ENCODE measurements at regions of chr9 and their contacts with region 1.

Region 1: GRCh38 chr9:122810306-122810946 is 10.5 kb downstream of the OR1K1 start:
- DNase-seq: peak; percentile 59 to 77 (median 63)
- H3K4me3 ChIP-seq: no peak overlapping the region
- H3K4me3 Mint-ChIP-seq: no peak overlapping the region
- H3K27ac ChIP-seq: no peak overlapping the region
- H3K27ac Mint-ChIP-seq: no peak overlapping the region
- H3K4me1 ChIP-seq: peaks cover 8 to 10% of the 10 kb centered on the region in 2 donors
- H3K4me1 Mint-ChIP-seq: peaks cover 9% of the 10 kb centered on the region
- H3K27me3 ChIP-seq: no peaks in the 10 kb centered on the region
- H3K27me3 Mint-ChIP-seq: peaks cover 0 to 7% (median 0%) of the 10 kb centered on the region in 3 donors
- CTCF ChIP-seq: peak; percentile 85

Region 2: GRCh38 chr9:122125158-122125508 is 685.3 kb before region 1 on chr9:
- intact Hi-C with region 1: loop called in 1 of 2 experiments (anchors 10 kb)
- DNase-seq: peak; percentile 56 to 66 (median 66)
- H3K4me3 ChIP-seq: no peak overlapping the region
- H3K4me3 Mint-ChIP-seq: peak overlapping the region in 1 of 2 donors; percentile 86
- H3K27ac ChIP-seq: no peak overlapping the region
- H3K27ac Mint-ChIP-seq: no peak overlapping the region
- H3K4me1 ChIP-seq: peaks cover 4 to 9% of the 10 kb centered on the region in 2 donors
- H3K4me1 Mint-ChIP-seq: peaks cover 12% of the 10 kb centered on the region
- H3K27me3 ChIP-seq: peaks cover 18 to 30% of the 10 kb centered on the region in 2 donors
- H3K27me3 Mint-ChIP-seq: peaks cover 38 to 43% (median 41%) of the 10 kb centered on the region in 3 donors
- CTCF ChIP-seq: peak; percentile 88

Region 3: DNA sequence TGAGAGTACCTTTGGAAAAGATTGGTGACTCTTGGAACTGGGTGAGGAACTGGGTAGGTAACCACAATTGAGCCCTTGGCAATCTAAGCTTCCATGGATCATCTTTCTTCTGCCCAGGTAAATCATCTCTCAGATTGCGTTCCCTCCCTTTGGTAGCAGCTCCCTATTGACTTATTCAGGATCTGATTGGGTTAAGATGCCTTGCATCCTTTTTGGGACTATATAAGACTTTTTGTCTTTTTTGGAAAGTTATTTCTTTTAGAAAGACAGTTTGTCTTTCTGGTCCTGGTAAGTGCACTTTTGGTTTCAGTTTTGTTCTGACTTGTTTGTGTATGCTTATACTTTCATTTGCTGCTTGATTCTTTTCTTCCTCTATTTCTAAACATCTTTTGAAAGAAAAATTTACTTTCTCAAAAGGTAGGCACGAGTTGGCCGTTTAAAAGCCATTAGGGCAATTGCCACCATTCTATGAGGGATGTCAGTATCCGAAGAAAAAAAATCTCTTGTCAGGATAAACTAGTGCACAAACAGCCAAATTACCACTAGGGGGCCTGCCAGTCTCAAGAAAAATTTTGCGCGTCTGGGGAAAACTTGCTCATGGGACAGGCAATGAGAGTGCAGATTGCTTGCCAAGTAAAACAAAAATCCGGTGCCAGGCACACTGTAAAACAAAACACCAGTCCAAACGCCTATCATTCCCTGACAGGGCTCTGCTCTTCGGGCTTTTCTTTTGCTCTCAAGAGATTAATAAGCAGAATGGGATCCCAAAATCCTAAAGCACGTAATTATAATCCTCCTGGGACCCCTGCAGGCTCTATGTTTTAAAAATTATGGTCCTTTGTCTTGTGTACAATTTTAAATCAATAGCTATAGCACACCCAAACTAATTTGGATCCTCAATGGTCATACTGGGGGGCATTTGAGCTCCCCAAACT is 345.5 kb before region 1 on chr9:
- intact Hi-C with region 1: loop called (anchors 5 to 10 kb)
- DNase-seq: peak; percentile 51 to 58 (median 58)
- H3K4me3 ChIP-seq: peak overlapping the region; percentile 62 to 97 (median 81)
- H3K4me3 Mint-ChIP-seq: peak overlapping the region; percentile 74 to 90
- H3K27ac ChIP-seq: peak overlapping the region in 1 of 2 donors; percentile 67
- H3K27ac Mint-ChIP-seq: peak overlapping the region in 6 of 7 donors; percentile 50 to 85 (median 67)
- H3K4me1 ChIP-seq: peaks cover 5 to 13% of the 10 kb centered on the region in 2 donors
- H3K4me1 Mint-ChIP-seq: peaks cover 12% of the 10 kb centered on the region
- H3K27me3 ChIP-seq: no peaks in the 10 kb centered on the region
- H3K27me3 Mint-ChIP-seq: peaks cover 4 to 22% (median 8%) of the 10 kb centered on the region in 3 donors
- CTCF ChIP-seq: peak; percentile 89

Measured in CD14-positive monocyte (primary cell).